Aorta (tissue), 5 donors: ENCODE measurements at regions of chr11 and their contacts with region 1.

Region 1: GRCh38 chr11:115672999-115673411 is 168.8 kb upstream of the CADM1 start:
- DNase-seq: no peak
- ATAC-seq: peak; percentile 55
- H3K4me3 ChIP-seq: no peak overlapping the region
- H3K27ac ChIP-seq: no peak overlapping the region
- H3K4me1 ChIP-seq: no peaks in the 10 kb centered on the region
- H3K27me3 ChIP-seq: no peaks in the 10 kb centered on the region

Region 2: GRCh38 chr11:115590254-115590653 is 82.8 kb before region 1 on chr11:
- intact Hi-C with region 1: no loop called
- DNase-seq: no peak
- ATAC-seq: no peak
- H3K4me3 ChIP-seq: no peak overlapping the region
- H3K27ac ChIP-seq: no peak overlapping the region
- H3K4me1 ChIP-seq: no peaks in the 10 kb centered on the region
- H3K27me3 ChIP-seq: no peaks in the 10 kb centered on the region

Region 3: DNA sequence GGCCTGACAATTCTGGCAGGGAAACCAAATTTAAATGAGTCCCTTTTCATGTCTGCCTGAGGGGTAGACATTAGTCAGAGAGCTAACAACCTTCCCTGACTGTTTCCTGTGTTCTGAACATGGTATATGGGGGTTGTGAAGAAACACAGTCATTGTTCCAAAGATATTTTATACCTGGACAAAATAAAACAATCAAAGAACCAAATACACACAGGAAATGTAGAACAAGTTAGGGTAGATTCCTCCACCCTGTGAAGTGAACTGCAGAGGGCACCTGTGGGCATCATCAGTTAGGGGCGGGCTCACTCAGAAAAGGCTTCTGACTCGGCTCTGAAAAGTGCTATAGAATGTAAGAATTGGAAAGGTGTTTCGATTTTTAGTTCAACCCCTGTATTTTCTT is 63.1 kb after region 1 on chr11:
- intact Hi-C with region 1: loop called in 1 of 2 experiments (anchors 10 kb)
- DNase-seq: no peak
- ATAC-seq: no peak
- H3K4me3 ChIP-seq: no peak overlapping the region
- H3K27ac ChIP-seq: no peak overlapping the region
- H3K4me1 ChIP-seq: no peaks in the 10 kb centered on the region
- H3K27me3 ChIP-seq: no peaks in the 10 kb centered on the region